AG04450 (cell line): ENCODE measurements at regions of chr6 and their contacts with region 1.

Region 1: GRCh38 chr6:86107985-86108384 is 465.3 kb upstream of the SYNCRIP start:
- DNase-seq: no peak
- H3K4me3 ChIP-seq: no peak overlapping the region
- H3K27ac ChIP-seq: no peak overlapping the region
- H3K27me3 ChIP-seq: no peaks in the 10 kb centered on the region
- CTCF ChIP-seq: no peak

Region 2: DNA sequence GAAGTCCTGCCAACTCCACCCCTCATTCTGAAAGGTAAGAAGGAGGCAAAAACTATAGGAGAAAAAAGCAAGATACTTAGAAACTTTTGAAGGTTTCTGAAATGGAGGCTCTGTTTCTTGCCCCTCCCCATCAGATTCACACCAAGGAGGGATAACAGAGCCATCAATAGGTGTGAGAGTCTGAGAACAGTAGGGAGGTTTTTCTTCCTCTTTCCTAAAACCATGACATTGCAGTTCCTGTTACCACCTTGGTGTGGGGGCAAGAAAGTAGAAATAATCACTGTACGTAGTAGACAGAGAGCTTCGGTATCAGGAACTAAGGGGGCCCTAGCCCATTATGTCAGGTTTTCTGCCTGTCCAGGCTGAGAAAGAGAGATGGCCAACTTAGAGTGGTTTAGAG is 132.0 kb before region 1 on chr6:
- CTCF ChIA-PET with region 1: no interaction called
- POLR2A ChIA-PET with region 1: no interaction called
- DNase-seq: no peak
- H3K4me3 ChIP-seq: no peak overlapping the region
- H3K27ac ChIP-seq: no peak overlapping the region
- H3K27me3 ChIP-seq: no peaks in the 10 kb centered on the region
- CTCF ChIP-seq: no peak

Region 3: DNA sequence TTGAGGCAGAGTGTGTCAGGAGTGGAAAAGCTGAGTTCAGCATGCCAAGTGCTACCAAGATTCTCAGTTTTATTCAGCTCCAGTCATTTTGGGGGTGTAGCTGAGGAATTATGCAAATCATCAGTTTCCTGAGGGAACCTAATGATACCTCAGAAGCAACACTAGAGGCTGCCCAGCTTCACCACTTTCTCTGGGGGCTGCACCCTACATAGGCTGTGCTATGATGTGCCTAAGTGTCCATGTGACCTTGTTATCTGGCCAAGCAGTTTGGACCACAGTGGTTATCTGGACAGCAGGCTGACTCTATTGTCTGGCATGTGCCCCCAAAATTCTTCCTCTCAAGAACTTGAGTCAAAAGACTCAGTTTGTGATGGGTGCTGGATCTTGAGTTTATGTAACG is 90.7 kb before region 1 on chr6:
- CTCF ChIA-PET with region 1: no interaction called
- POLR2A ChIA-PET with region 1: no interaction called
- DNase-seq: no peak
- H3K4me3 ChIP-seq: no peak overlapping the region
- H3K27ac ChIP-seq: no peak overlapping the region
- H3K27me3 ChIP-seq: no peaks in the 10 kb centered on the region
- CTCF ChIP-seq: no peak

Region 4: DNA sequence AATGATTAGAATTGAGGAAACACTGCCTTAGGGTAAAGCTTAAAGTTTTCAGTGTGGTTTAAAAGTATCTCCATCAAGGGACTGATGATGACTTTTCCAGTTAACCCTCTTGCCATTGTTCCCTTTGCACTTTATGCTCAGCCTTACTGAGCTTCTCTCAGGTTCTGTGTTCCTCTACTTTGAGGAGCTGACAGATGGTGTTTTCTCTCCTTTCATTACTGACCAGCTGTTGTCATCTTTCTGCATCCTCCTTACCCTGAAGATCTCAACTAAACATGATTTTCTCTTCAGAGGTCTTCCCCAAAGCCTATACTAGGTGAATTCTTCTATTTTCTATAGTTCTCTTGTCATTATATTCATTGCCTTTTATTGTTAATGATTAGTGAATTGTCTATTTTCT is 10.3 kb after region 1 on chr6:
- CTCF ChIA-PET with region 1: no interaction called
- POLR2A ChIA-PET with region 1: no interaction called
- DNase-seq: no peak
- H3K4me3 ChIP-seq: no peak overlapping the region
- H3K27ac ChIP-seq: no peak overlapping the region
- H3K27me3 ChIP-seq: no peaks in the 10 kb centered on the region
- CTCF ChIP-seq: no peak

Region 5: DNA sequence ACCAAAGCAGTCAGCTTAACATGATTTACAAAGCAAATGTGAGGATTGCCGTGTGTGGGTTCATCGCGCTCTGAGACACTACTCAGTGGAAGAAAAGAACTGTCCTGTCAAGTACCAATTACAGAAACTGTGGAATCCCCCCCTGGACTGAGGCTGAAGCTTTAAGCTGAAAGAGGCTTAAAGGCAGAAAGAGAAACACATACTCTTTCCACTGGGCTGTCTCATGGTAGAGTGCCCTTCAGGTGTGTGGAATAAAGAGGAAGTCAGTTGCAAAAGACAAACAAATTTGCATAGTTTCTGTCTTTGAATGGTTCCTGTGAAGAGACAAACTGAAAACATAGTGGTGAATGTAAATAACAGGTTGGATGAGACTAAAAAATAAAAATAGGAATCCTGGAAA is 95.1 kb after region 1 on chr6:
- CTCF ChIA-PET with region 1: no interaction called
- POLR2A ChIA-PET with region 1: no interaction called
- DNase-seq: no peak
- H3K4me3 ChIP-seq: no peak overlapping the region
- H3K27ac ChIP-seq: no peak overlapping the region
- H3K27me3 ChIP-seq: no peaks in the 10 kb centered on the region
- CTCF ChIP-seq: no peak

Region 6: DNA sequence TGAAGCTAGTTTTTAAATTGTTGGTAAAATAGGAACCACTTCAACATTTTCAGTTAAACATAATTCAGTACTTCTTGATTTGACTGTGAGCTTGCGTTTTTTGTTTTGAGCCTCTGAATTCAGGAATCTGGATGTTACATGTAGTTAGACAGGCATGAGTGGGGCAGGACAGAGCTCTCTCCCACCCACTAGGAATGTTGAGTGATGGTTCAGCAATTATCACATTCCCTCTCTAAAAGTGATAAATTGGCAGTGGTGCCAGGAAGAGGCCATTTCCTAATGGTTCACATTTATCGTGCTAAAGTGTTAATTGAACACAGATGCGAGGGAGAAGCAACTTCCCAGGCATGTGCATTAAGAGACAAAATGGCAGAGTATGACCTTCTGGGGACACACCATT is 363.8 kb after region 1 on chr6:
- CTCF ChIA-PET with region 1: interaction called, 12 read pairs
- POLR2A ChIA-PET with region 1: no interaction called
- DNase-seq: no peak
- H3K4me3 ChIP-seq: no peak overlapping the region
- H3K27ac ChIP-seq: no peak overlapping the region
- H3K27me3 ChIP-seq: no peaks in the 10 kb centered on the region
- CTCF ChIP-seq: no peak